Astrocyte of the cerebellum (primary cell): ENCODE measurements at regions of chr1 and their contacts with region 1.

Region 1: GRCh38 chr1:230130172-230130944 is 63.3 kb downstream of the GALNT2 start:
- DNase-seq: no peak
- H3K4me3 ChIP-seq: no peak overlapping the region
- CTCF ChIP-seq: no peak

Region 2: GRCh38 chr1:230073371-230074035 is 56.9 kb before region 1 on chr1:
- in situ Hi-C with region 1: loop called (anchors 5 kb)
- DNase-seq: no peak
- H3K4me3 ChIP-seq: no peak overlapping the region
- CTCF ChIP-seq: no peak

Region 3: DNA sequence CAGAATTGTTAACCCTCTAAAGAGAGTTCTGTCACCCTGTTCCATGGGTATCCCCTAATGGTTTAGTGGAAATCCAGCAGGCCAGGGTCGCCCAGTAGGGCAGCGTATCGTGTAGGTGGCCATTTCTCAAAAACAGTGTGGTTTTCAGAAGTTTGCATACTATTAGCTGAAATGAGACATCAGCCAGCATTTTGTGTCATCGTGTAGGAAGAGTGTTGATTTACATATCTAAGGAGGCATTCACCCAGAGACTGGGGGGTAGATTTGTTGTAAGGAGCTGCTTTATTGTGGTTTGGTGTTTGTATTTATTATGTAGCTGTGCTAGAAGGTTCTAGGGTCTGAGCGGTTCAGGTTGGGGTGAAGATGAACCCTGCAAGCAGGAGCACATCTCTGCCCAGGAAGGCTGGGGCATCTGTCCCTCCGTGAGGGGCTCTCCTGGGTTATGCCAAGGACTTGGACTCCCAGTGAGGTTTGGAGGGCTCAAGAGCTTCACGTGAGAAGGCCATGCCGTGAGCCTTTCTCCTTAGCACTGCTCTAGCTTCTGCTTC is 121.4 kb after region 1 on chr1:
- in situ Hi-C with region 1: no loop called
- DNase-seq: no peak
- H3K4me3 ChIP-seq: no peak overlapping the region
- CTCF ChIP-seq: no peak